ENCODE measurements at regions of chr20 and their contacts with region 1.

Region 1: DNA sequence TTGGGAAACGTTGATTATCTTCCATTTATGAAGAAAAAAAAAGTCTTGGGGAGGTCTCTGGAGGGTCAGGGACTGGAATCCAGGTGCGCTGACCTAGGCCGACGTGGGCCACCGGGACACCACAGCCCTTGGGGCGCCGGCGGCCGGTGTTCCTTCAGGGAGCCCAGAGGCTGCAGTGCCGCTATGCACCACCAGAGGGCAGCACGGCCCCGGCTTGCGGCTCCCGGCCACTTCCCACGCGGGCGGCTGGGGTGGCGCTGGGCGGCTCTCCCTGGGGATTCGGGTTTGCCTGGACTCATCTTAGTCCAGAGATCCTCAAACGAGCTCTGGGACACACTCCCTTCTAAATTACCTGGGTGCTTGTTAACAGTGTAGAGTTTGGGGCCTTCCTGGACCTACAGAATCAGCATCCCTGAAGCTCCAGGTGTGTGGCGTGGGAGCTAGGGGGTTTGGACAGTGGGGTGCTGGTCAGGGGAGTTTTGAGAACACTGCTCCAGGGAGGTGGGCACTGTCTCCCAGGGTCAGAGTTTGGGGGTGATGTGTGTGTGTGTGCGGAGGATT is 23.0 kb upstream of the GTSF1L start:
- DNase-seq: peak; percentile 64 to 89 (median 74)
- ATAC-seq: peak; percentile 47 to 90 (median 88)
- H3K4me3 ChIP-seq: no peak overlapping the region
- H3K27ac ChIP-seq: no peak overlapping the region
- H3K4me1 ChIP-seq: peaks cover 0 to 35% (median 0%) of the 10 kb centered on the region in 12 donors
- H3K27me3 ChIP-seq: peaks cover 0 to 54% (median 0%) of the 10 kb centered on the region in 9 donors
- CTCF ChIP-seq: peak in 11 of 12 donors; percentile 97 to 100 (median 99)
- POLR2A ChIP-seq: no peak

Region 2: DNA sequence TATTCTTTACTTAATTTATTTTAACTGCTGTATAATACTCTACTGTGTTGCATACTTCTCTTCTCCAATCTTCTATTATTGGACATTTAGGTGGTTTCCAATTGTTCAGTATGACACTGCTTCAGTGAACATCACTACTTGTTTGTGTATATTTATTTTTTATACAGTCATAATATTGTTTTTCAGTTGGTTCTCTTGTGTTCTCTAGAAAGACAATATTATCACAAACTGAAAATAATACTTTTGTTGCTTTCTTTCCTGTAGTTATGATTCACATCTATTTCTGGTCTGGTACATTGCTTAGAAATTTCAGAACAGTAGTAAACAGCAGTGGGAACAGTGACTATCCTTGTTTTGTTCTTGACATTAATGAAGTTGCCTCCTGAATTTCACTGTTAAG is 39.8 kb after region 1 on chr20:
- intact Hi-C with region 1: no loop called
- DNase-seq: no peak
- ATAC-seq: no peak
- H3K4me3 ChIP-seq: no peak overlapping the region
- H3K27ac ChIP-seq: no peak overlapping the region
- H3K4me1 ChIP-seq: no peaks in the 10 kb centered on the region
- H3K27me3 ChIP-seq: peaks cover 0 to 7% (median 0%) of the 10 kb centered on the region in 9 donors
- CTCF ChIP-seq: no peak
- POLR2A ChIP-seq: no peak

Region 3: GRCh38 chr20:43833511-43834395 is 83.9 kb after region 1 on chr20:
- intact Hi-C with region 1: loop called in 1 of 10 experiments (anchors 5 kb)
- DNase-seq: no peak
- ATAC-seq: no peak
- H3K4me3 ChIP-seq: no peak overlapping the region
- H3K27ac ChIP-seq: no peak overlapping the region
- H3K4me1 ChIP-seq: no peaks in the 10 kb centered on the region
- H3K27me3 ChIP-seq: peaks cover 0 to 24% (median 0%) of the 10 kb centered on the region in 9 donors
- CTCF ChIP-seq: no peak
- POLR2A ChIP-seq: no peak

Region 4: GRCh38 chr20:43840382-43841070 is 90.7 kb after region 1 on chr20:
- intact Hi-C with region 1: loop called in 3 of 10 experiments (anchors 5 to 10 kb)
- DNase-seq: no peak
- ATAC-seq: no peak
- H3K4me3 ChIP-seq: no peak overlapping the region
- H3K27ac ChIP-seq: no peak overlapping the region
- H3K4me1 ChIP-seq: peaks cover 0 to 9% (median 0%) of the 10 kb centered on the region in 12 donors
- H3K27me3 ChIP-seq: peaks cover 0 to 9% (median 0%) of the 10 kb centered on the region in 9 donors
- CTCF ChIP-seq: peak in 9 of 12 donors; percentile 17 to 32 (median 19)
- POLR2A ChIP-seq: no peak

Region 5: DNA sequence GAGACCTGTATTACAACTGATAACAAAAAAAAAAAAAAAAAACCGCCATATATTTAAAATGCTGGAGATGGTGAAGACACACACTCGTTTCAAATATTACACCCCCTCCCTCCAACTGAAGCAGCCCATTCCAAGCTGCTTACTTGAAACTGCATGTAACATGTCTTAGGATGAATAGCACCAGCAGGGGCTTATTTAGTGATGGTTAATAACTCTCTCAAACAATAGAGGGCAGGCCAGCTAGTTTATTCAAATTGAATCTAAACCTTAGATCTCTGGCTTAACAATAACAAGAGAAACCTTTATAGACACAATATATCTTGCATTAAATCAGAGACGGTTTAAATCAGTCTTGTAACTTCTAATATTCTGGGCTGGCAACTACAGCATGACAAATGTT is 446.5 kb after region 1 on chr20:
- intact Hi-C with region 1: loop called in 1 of 10 experiments (anchors 10 kb)
- DNase-seq: no peak
- ATAC-seq: no peak
- H3K4me3 ChIP-seq: no peak overlapping the region
- H3K27ac ChIP-seq: no peak overlapping the region
- H3K4me1 ChIP-seq: peaks cover 0 to 20% (median 8%) of the 10 kb centered on the region in 12 donors
- H3K27me3 ChIP-seq: no peaks in the 10 kb centered on the region
- CTCF ChIP-seq: no peak
- POLR2A ChIP-seq: no peak

Measured in heart left ventricle (tissue), 16 donors.